Esophagus squamous epithelium (tissue), 5 donors: ENCODE measurements at regions of chr15 and their contacts with region 1.

Region 1: DNA sequence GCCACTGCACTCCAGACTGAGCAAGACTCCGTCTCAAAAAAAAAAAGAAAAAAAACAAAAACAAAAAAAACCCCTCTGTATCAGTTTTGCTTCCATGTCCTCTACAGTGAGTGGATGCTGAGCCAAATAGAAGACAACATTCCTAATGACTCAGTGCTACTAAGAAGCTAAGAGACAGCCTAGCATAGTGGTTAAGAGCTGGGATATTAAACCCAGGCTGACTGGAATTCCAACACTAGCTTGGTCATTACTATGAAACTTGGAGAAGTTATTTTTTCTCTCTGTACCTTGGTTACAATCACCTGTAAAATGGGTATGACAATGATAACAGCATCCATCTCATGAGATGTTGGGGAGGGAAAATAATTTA is 60.9 kb upstream of the PYGO1 start:
- DNase-seq: no peak
- H3K4me3 ChIP-seq: no peak overlapping the region
- H3K27ac ChIP-seq: no peak overlapping the region
- H3K4me1 ChIP-seq: no peaks in the 10 kb centered on the region
- H3K27me3 ChIP-seq: no peaks in the 10 kb centered on the region
- CTCF ChIP-seq: no peak
- POLR2A ChIP-seq: no peak

Region 2: GRCh38 chr15:55526559-55527036 is 122.4 kb before region 1 on chr15:
- intact Hi-C with region 1: loop called (anchors 10 kb)
- DNase-seq: no peak
- H3K4me3 ChIP-seq: no peak overlapping the region
- H3K27ac ChIP-seq: no peak overlapping the region
- H3K4me1 ChIP-seq: no peaks in the 10 kb centered on the region
- H3K27me3 ChIP-seq: peaks cover 0 to 11% (median 0%) of the 10 kb centered on the region in 4 donors
- CTCF ChIP-seq: peak in 5 of 6 experiments; percentile 29 to 62 (median 45)
- POLR2A ChIP-seq: no peak

Region 3: DNA sequence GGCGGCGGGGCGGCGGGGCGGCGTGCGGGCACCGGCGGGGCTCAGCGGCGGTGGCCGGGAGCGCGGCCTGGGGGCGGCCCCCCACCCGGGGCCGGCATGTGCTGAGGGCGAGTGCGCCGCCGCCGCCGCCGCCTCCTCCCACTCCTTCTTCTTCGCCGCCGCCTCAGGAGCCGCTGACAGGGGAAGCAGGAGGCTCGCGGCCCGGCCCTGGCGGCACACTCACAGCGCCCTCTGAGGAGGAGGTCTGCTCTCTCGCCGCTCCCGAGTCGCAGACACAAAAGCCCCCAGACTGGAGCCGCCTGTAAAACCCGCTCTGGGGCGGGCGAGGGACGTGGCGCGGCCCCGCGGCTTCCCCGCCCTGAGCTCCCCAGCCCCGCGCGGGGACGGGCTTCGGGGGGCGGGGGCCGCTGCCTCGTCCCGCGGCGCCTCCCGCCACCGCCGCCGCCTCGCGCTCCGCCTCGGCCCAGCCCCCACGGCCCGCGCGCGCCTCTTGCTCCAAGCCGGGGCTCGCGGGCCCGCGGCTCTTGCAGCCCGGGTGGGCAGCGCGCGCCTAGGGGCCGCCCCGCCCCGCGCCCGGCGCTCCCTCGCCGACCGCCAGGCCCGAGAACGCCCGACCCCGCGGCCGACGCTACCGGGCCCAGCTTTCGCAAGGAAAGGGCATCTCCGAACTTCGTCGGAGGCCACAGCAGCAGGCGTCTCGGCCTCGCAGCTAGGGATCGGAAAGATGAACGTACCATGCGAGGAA is 60.8 kb before region 1 on chr15 and contains the start of gene PYGO1:
- intact Hi-C with region 1: no loop called
- DNase-seq: no peak
- H3K4me3 ChIP-seq: peak within 1 kb of the TSS; percentile 43 to 80 (median 61)
- H3K27ac ChIP-seq: peak within 1 kb of the TSS; percentile 76 to 91 (median 83)
- H3K4me1 ChIP-seq: peaks cover 0 to 28% (median 0%) of the 10 kb centered on the region in 3 donors
- H3K27me3 ChIP-seq: peaks cover 0 to 33% (median 0%) of the 10 kb centered on the region in 4 donors
- CTCF ChIP-seq: no peak
- POLR2A ChIP-seq: no peak
- total RNA-seq, gene PYGO1: 1.3 to 5.1 (median 1.8) TPM

Region 4: GRCh38 chr15:55721554-55722185 is 72.6 kb after region 1 on chr15:
- intact Hi-C with region 1: no loop called
- DNase-seq: no peak
- H3K4me3 ChIP-seq: no peak overlapping the region
- H3K27ac ChIP-seq: no peak overlapping the region
- H3K4me1 ChIP-seq: no peaks in the 10 kb centered on the region
- H3K27me3 ChIP-seq: peaks cover 0 to 8% (median 0%) of the 10 kb centered on the region in 4 donors
- CTCF ChIP-seq: no peak
- POLR2A ChIP-seq: no peak

Region 5: GRCh38 chr15:55858661-55859060 is 209.6 kb after region 1 on chr15:
- intact Hi-C with region 1: no loop called
- DNase-seq: no peak
- H3K4me3 ChIP-seq: no peak overlapping the region
- H3K27ac ChIP-seq: no peak overlapping the region
- H3K4me1 ChIP-seq: no peaks in the 10 kb centered on the region
- H3K27me3 ChIP-seq: no peaks in the 10 kb centered on the region
- CTCF ChIP-seq: no peak
- POLR2A ChIP-seq: no peak

Region 6: GRCh38 chr15:55977226-55977625 is 328.2 kb after region 1 on chr15:
- intact Hi-C with region 1: no loop called
- DNase-seq: no peak
- H3K4me3 ChIP-seq: no peak overlapping the region
- H3K27ac ChIP-seq: no peak overlapping the region
- H3K4me1 ChIP-seq: no peaks in the 10 kb centered on the region
- H3K27me3 ChIP-seq: no peaks in the 10 kb centered on the region
- CTCF ChIP-seq: no peak
- POLR2A ChIP-seq: no peak